Mammary epithelial cell (primary cell): ENCODE measurements at regions of chr3 and their contacts with region 1.

Region 1: DNA sequence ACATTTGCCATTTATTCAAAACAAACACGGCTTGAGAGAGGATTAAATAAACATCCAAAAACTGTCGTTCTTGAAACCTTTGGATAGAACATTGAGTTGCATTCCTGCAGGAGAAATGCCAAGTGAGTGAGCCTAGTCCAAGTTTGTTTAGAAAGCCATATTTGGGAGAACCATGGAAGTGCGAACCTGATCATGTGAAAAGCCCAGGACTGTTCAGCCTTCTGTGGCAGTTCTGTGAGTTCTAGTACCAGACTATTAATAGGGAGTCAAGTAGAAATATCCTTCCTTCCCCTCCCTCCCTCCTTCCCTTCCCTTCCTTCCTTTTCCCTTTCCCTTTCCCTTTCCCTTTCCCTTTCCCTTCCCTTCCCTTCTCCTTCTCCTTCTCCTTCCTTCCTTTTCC is 470.4 kb downstream of the LPP start:
- DNase-seq: no peak
- H3K4me3 ChIP-seq: no peak overlapping the region
- H3K27ac ChIP-seq: no peak overlapping the region
- H3K4me1 ChIP-seq: peaks cover 19% of the 10 kb centered on the region
- H3K27me3 ChIP-seq: no peaks in the 10 kb centered on the region
- CTCF ChIP-seq: no peak

Region 2: DNA sequence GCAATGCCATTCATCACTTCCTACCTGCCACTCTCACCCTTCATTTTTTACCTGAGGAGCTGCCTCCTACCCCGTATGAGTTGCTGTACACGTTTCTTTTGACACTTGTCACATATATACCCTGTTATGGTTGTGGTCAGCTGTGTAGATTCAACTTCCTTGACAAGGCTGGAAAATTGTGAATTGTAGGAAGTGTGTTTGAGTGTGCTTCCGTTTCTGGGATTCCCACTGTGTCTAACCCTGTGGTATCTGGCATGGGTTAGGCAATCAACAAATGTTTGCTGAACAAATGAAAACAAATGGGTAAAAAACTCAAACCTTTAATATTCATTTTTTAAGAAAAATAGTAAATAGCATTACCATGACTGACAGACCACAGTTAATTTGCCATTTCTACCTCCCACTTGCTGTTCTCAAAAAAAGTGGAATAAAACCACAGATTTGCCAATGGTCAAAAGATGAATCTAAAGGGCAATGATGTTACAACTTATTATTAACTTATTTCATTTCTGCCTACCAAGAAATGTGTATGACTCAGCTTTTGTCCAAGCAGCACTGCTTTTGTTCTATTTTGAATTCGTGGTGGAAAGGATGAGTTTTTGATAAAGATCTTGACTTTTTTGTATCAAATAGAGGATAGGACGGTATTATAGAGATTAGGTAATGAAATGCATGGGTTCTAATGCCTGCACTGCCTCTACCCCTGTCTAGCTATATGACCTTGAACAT is 65.9 kb before region 1 on chr3:
- CTCF ChIA-PET with region 1: no interaction called
- dilution Hi-C with region 1: no loop called
- in situ Hi-C with region 1: no loop called
- intact Hi-C with region 1: no loop called
- DNase-seq: no peak
- H3K4me3 ChIP-seq: no peak overlapping the region
- H3K27ac ChIP-seq: no peak overlapping the region
- H3K4me1 ChIP-seq: no peaks in the 10 kb centered on the region
- H3K27me3 ChIP-seq: no peaks in the 10 kb centered on the region
- CTCF ChIP-seq: no peak

Region 3: DNA sequence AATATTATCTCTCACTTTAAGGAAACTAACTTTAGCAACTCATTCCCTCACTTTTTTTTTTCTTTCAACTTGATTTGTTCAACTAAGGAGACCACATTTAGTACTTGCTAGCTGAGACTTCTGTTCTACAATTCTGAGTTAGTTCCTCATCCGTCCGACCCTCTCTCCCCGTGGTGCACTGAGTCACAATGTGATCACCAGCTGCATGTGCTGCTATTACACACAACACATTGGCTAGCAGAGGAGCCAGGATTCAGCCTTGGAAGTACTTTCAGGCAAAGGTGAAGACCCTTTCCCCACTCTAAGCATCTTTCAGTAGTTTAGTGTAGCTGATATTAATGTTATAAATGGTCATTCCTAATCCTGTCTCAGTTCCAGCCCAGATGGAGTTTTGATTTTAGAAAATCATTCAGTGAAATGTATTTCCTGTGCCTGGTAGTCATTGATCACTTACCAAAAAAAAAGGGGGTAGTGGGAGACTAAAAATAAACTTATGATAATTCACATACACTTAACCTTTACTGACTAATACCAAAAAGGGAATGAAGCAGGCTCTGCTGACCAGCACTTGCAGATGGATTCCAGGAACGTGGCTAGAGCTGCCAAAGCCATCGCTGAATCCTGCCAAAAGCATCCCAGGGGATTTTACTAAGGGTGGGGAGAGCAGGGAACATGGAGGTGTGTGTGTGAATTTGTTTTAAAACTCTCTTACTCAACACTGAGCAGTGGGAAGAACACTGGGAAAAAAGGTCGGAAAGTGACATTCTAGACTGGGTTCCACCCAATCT is 45.6 kb before region 1 on chr3:
- CTCF ChIA-PET with region 1: no interaction called
- dilution Hi-C with region 1: no loop called
- in situ Hi-C with region 1: no loop called
- intact Hi-C with region 1: no loop called
- DNase-seq: peak; percentile 38
- H3K4me3 ChIP-seq: no peak overlapping the region
- H3K27ac ChIP-seq: no peak overlapping the region
- H3K4me1 ChIP-seq: peaks cover 19% of the 10 kb centered on the region
- H3K27me3 ChIP-seq: no peaks in the 10 kb centered on the region
- CTCF ChIP-seq: no peak

Region 4: GRCh38 chr3:188594139-188594538 is 30.2 kb before region 1 on chr3:
- CTCF ChIA-PET with region 1: no interaction called
- dilution Hi-C with region 1: no loop called
- in situ Hi-C with region 1: no loop called
- intact Hi-C with region 1: loop called (anchors 1 kb)
- DNase-seq: peak; percentile 72
- H3K4me3 ChIP-seq: no peak overlapping the region
- H3K27ac ChIP-seq: peak overlapping the region; percentile 67
- H3K4me1 ChIP-seq: peaks cover 37% of the 10 kb centered on the region
- H3K27me3 ChIP-seq: no peaks in the 10 kb centered on the region
- CTCF ChIP-seq: no peak

Region 5: GRCh38 chr3:188635258-188636042 is 11.1 kb after region 1 on chr3:
- CTCF ChIA-PET with region 1: no interaction called
- dilution Hi-C with region 1: no loop called
- in situ Hi-C with region 1: no loop called
- intact Hi-C with region 1: no loop called
- DNase-seq: no peak
- H3K4me3 ChIP-seq: no peak overlapping the region
- H3K27ac ChIP-seq: no peak overlapping the region
- H3K4me1 ChIP-seq: no peaks in the 10 kb centered on the region
- H3K27me3 ChIP-seq: no peaks in the 10 kb centered on the region
- CTCF ChIP-seq: no peak

Region 6: GRCh38 chr3:189071441-189071840 is 447.1 kb after region 1 on chr3:
- CTCF ChIA-PET with region 1: no interaction called
- dilution Hi-C with region 1: no loop called
- in situ Hi-C with region 1: no loop called
- intact Hi-C with region 1: no loop called
- DNase-seq: peak; percentile 60
- H3K4me3 ChIP-seq: no peak overlapping the region
- H3K27ac ChIP-seq: no peak overlapping the region
- H3K4me1 ChIP-seq: no peaks in the 10 kb centered on the region
- H3K27me3 ChIP-seq: peaks cover 8% of the 10 kb centered on the region
- CTCF ChIP-seq: no peak